ENCODE measurements at regions of chr10 and their contacts with region 1.

Region 1: GRCh38 chr10:50417886-50418830 is 166.8 kb upstream of the ASAH2 start:
- DNase-seq: peak; percentile 81 to 92
- ATAC-seq: peak; percentile 87
- H3K4me3 ChIP-seq: peak overlapping the region; percentile 72 to 93
- H3K27ac ChIP-seq: peak overlapping the region in 1 of 2 donors; percentile 16
- H3K4me1 ChIP-seq: no peaks in the 10 kb centered on the region
- H3K27me3 ChIP-seq: no peaks in the 10 kb centered on the region

Region 2: DNA sequence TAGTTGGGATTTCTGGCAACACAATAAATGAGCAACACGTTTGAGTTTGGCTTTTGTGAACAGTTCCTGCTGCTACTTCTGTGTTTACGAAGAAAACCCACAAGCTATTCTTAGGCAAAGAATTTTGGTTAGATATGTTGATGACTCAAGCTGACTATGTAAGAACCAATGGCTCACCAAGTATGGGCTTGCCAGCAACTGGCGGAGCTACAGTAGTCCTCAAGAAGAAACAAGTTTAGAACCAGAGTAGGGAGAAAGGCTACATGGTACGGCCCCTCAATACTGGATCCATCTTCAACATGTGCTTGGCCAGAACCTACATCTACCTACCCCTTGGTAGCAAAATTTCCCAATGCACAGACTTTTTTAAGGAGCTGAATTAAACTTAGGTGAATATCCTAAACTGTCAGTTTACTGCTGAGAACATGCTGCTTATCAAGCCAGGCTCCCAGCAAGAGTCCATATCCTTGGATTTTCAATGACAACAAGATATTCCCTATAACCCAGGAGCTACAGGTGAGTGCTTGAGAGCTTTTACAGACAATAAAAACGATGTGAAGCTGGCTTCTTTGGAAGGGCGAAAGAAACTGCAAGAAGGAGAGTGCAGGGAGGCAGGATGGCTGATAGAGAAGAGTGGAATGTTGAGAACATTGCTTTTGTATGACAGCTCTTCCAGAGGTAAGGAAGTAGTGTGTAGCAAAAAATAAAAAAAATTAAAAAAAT is 92.5 kb before region 1 on chr10:
- intact Hi-C with region 1: loop called (anchors 5 to 10 kb)
- DNase-seq: peak; percentile 84 to 86
- ATAC-seq: peak; percentile 83
- H3K4me3 ChIP-seq: peak overlapping the region in 1 of 2 donors; percentile 64
- H3K27ac ChIP-seq: peak overlapping the region; percentile 87 to 90
- H3K4me1 ChIP-seq: peaks cover 4 to 7% of the 10 kb centered on the region in 2 donors
- H3K27me3 ChIP-seq: no peaks in the 10 kb centered on the region

Region 3: DNA sequence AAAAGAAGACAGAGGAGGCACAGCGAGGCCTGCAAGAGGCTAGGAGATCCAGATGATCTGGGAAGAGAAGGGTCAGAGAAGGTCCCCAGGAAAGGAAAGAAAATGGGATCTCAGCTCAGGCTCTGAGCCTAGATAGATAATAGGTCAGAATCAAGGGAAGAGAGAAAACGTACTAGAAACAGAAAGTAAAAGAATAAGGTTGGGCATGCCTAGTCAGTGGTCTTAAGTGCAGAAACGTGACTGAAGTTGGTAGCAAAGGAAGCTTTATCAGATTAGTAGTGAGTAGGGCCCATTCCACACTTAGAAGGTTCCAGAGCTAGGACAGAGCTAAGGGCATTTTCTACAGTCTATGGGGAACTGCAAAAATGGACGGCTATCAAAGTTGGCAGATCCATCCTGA is 82.0 kb before region 1 on chr10:
- intact Hi-C with region 1: loop called in 1 of 2 experiments (anchors 10 kb)
- DNase-seq: no peak
- ATAC-seq: no peak
- H3K4me3 ChIP-seq: no peak overlapping the region
- H3K27ac ChIP-seq: no peak overlapping the region
- H3K4me1 ChIP-seq: no peaks in the 10 kb centered on the region
- H3K27me3 ChIP-seq: no peaks in the 10 kb centered on the region

Region 4: DNA sequence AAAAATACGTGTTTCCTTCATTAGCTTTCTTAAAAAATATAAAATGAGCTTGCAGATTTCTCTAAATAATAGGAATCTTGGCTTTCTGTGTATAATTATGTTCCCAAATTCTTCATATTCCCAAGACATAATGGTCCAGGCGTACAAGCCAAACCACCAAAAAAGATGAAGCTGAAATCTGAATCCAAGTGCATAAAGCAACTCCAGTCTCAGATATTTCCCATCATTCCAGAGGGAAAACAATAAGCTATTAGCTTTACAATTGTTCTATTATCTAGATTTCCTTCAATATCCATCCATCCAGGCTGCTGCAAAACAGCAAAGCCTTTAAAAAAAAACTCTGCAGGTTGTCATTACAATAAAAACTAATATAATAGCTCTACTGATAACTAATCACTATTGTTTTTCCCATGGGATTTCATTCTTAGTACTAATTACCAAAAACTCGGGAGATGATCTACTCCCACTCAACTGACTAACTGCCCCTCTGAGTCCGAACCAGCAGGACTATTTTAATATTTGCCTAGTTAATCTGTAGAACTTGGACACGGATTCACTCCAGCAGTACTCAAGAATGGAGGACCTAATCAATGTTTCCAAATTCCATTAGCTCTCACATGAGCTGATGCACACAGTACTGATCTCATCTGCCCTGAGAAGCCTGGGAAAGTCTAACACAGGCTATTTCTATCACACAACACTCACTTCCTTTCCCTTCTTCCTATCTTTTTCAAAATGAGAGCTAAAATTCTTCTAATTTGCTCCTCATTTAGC is 57.9 kb before region 1 on chr10:
- intact Hi-C with region 1: no loop called
- DNase-seq: no peak
- ATAC-seq: peak; percentile 76
- H3K4me3 ChIP-seq: no peak overlapping the region
- H3K27ac ChIP-seq: no peak overlapping the region
- H3K4me1 ChIP-seq: peaks cover 0 to 3% of the 10 kb centered on the region in 2 donors
- H3K27me3 ChIP-seq: no peaks in the 10 kb centered on the region

Region 5: DNA sequence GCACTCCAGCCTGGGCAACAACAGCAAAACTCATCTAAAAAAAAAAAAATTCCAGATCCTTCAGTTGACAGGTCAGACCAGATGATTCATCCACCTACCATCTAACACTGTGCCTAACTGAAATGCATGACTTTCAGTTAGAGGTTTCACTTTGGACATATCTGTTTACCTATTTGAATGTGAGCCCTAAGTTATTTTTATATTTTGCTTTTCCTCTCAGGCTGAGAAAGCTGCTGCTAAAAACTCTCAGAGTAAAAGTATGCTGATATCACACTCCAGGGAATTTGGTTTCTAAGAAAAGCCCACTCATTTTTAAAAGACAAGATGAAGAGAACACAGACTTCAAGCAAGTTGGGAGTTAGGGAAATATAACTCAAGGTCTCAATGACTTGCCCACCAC is 79.6 kb after region 1 on chr10:
- intact Hi-C with region 1: loop called in 1 of 2 experiments (anchors 10 kb)
- DNase-seq: no peak
- ATAC-seq: peak; percentile 59
- H3K4me3 ChIP-seq: peak overlapping the region in 1 of 2 donors; percentile 48
- H3K27ac ChIP-seq: peak overlapping the region in 1 of 2 donors; percentile 44
- H3K4me1 ChIP-seq: no peaks in the 10 kb centered on the region
- H3K27me3 ChIP-seq: no peaks in the 10 kb centered on the region

Measured in aorta (tissue), 5 donors.